ENCODE measurements at regions of chr13 and their contacts with region 1.

Region 1: DNA sequence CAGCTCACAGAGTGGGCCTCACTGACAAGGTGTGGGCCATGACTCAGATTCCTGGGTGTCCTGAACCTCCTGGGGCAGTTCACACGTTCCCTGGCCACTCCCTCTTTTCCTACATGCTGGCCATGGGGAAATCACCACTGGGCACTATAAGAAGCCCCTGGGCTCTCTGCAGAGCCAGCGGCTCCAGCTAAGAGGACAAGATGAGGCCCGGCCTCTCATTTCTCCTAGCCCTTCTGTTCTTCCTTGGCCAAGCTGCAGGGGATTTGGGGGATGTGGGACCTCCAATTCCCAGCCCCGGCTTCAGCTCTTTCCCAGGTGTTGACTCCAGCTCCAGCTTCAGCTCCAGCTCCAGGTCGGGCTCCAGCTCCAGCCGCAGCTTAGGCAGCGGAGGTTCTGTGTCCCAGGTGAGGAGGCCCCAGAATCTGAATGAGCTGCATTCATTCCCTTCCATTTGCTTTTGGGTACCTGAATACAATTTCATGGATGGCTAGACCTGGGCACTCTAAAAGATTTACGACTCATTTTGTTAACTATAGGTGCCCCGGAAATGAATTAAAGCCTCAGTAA is at the start of gene OLFM4:
- DNase-seq: no peak
- ATAC-seq: no peak
- H3K4me3 ChIP-seq: no peak within 1 kb of the TSS
- H3K4me3 Mint-ChIP-seq: no peak within 1 kb of the TSS
- H3K27ac ChIP-seq: no peak within 1 kb of the TSS
- H3K27ac Mint-ChIP-seq: no peak within 1 kb of the TSS
- H3K4me1 ChIP-seq: no peaks in the 10 kb centered on the region
- H3K4me1 Mint-ChIP-seq: no peaks in the 10 kb centered on the region
- H3K27me3 ChIP-seq: peaks cover 0 to 5% of the 10 kb centered on the region in 2 experiments
- H3K27me3 Mint-ChIP-seq: peaks cover 0 to 5% of the 10 kb centered on the region in 2 donors
- total RNA-seq, gene OLFM4: 0.10 to 0.16 (median 0.15) TPM in 3 of 5 donors, not detected in the others

Region 2: DNA sequence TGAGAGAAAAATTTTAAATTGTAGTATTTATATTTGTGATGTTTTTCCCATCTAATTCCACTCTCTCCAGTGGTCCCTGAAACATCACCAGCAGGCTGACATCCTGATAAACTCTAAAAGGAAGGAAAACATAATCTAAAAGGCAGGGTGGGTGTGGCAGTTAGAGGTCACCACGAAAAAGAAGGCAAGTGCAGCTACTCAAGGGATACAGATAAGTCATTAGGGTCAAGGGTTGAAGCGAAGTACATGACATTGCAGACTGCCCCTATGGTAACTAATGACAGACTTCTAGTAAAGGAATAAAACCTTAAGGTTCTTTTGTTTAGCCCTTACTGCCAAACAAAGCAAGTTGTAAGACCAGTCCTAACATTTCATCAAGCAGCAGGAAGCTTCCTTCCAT is 863.3 kb before region 1 on chr13:
- CTCF ChIA-PET with region 1: no interaction called
- POLR2A ChIA-PET with region 1: no interaction called
- DNase-seq: no peak
- ATAC-seq: no peak
- H3K4me3 ChIP-seq: no peak overlapping the region
- H3K4me3 Mint-ChIP-seq: no peak overlapping the region
- H3K27ac ChIP-seq: no peak overlapping the region
- H3K27ac Mint-ChIP-seq: no peak overlapping the region
- H3K4me1 ChIP-seq: peaks cover 2 to 7% of the 10 kb centered on the region in 2 experiments
- H3K4me1 Mint-ChIP-seq: peaks cover 0 to 16% (median 16%) of the 10 kb centered on the region in 3 donors
- H3K27me3 ChIP-seq: no peaks in the 10 kb centered on the region
- H3K27me3 Mint-ChIP-seq: no peaks in the 10 kb centered on the region

Region 3: DNA sequence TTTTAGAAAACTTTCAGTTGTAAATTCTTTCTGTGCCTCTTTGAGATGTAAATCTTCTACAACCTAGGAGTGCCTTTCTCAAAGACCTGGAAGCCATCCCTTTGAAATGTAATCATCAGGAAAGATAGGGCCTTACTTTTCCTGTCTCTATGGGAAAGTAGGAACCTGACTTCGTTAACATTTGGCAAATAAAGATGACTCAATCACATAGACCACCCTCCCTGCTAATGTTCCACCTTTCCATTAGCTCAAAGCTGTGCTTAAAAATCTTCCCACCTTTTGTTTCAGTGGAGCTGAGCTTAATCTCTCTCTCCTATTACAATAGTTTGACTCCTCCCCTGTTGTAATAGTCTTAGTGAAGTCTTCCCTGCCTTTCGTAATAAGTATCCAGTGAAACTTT is 247.5 kb after region 1 on chr13:
- CTCF ChIA-PET with region 1: no interaction called
- POLR2A ChIA-PET with region 1: interaction called in 1 of 2 experiments, 11 read pairs
- DNase-seq: no peak
- ATAC-seq: no peak
- H3K4me3 ChIP-seq: no peak overlapping the region
- H3K4me3 Mint-ChIP-seq: no peak overlapping the region
- H3K27ac ChIP-seq: no peak overlapping the region
- H3K27ac Mint-ChIP-seq: no peak overlapping the region
- H3K4me1 ChIP-seq: no peaks in the 10 kb centered on the region
- H3K4me1 Mint-ChIP-seq: no peaks in the 10 kb centered on the region
- H3K27me3 ChIP-seq: no peaks in the 10 kb centered on the region
- H3K27me3 Mint-ChIP-seq: no peaks in the 10 kb centered on the region

Measured in T-cell (primary cell).